Sciatic nerve (tissue), 2 donors: ENCODE measurements at regions of chr6 and their contacts with region 1.

Region 1: GRCh38 chr6:3712827-3713665 is 38.5 kb downstream of the PXDC1 start:
- DNase-seq: no peak
- ATAC-seq: no peak

Region 2: GRCh38 chr6:2744209-2744771 is 968.8 kb before region 1 on chr6:
- intact Hi-C with region 1: loop called (anchors 5 kb)
- DNase-seq: no peak
- ATAC-seq: no peak

Region 3: DNA sequence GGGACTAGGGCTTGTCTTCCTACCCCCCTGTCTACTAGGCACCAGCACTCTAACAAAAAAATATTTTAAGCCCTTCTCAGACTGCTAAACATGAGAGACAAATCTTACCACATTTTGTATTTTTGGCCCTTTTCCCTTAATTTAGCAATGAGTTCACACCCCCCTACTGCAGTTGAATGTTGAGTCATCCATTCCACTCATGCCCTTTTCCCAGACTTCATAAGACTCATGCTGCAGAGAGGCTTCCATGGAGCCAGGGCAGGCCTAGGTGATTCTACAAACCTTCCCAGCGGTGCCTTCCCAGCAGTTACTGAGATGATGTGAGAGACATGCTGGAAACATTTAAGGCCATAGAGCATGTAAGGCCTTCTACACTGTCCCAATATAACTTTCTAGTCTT is 15.4 kb before region 1 on chr6:
- intact Hi-C with region 1: no loop called
- DNase-seq: no peak
- ATAC-seq: peak; percentile 91

Region 4: GRCh38 chr6:4102687-4103244 is 389.7 kb after region 1 on chr6:
- intact Hi-C with region 1: no loop called
- DNase-seq: no peak
- ATAC-seq: no peak